Spleen (tissue), 13 donors: ENCODE measurements at regions of chr11 and their contacts with region 1.

Region 1: GRCh38 chr11:130434521-130435223 is 6.3 kb upstream of the ADAMTS8 start:
- DNase-seq: peak; percentile 87
- H3K4me3 ChIP-seq: peak overlapping the region; percentile 39 to 75 (median 49)
- H3K27ac ChIP-seq: peak overlapping the region in 6 of 8 donors; percentile 7 to 61 (median 58)
- H3K4me1 ChIP-seq: peaks cover 0 to 22% (median 5%) of the 10 kb centered on the region in 6 donors
- H3K27me3 ChIP-seq: peaks cover 0 to 25% (median 12%) of the 10 kb centered on the region in 7 donors
- CTCF ChIP-seq: peak; percentile 65 to 88 (median 80)
- POLR2A ChIP-seq: no peak

Region 2: GRCh38 chr11:130861902-130862860 is 427.5 kb after region 1 on chr11:
- intact Hi-C with region 1: loop called (anchors 2 kb)
- DNase-seq: peak; percentile 97
- H3K4me3 ChIP-seq: no peak overlapping the region
- H3K27ac ChIP-seq: no peak overlapping the region
- H3K4me1 ChIP-seq: peaks cover 0 to 9% (median 8%) of the 10 kb centered on the region in 6 donors
- H3K27me3 ChIP-seq: no peaks in the 10 kb centered on the region
- CTCF ChIP-seq: peak; percentile 92 to 100 (median 99)
- POLR2A ChIP-seq: no peak

Region 3: GRCh38 chr11:130894322-130895025 is 459.8 kb after region 1 on chr11:
- intact Hi-C with region 1: loop called (anchors 10 kb)
- DNase-seq: peak; percentile 84
- H3K4me3 ChIP-seq: no peak overlapping the region
- H3K27ac ChIP-seq: no peak overlapping the region
- H3K4me1 ChIP-seq: peaks cover 0 to 34% (median 12%) of the 10 kb centered on the region in 6 donors
- H3K27me3 ChIP-seq: no peaks in the 10 kb centered on the region
- CTCF ChIP-seq: peak; percentile 39 to 94 (median 82)
- POLR2A ChIP-seq: no peak